B cell (primary cell): ENCODE measurements at regions of chr3 and their contacts with region 1.

Region 1: DNA sequence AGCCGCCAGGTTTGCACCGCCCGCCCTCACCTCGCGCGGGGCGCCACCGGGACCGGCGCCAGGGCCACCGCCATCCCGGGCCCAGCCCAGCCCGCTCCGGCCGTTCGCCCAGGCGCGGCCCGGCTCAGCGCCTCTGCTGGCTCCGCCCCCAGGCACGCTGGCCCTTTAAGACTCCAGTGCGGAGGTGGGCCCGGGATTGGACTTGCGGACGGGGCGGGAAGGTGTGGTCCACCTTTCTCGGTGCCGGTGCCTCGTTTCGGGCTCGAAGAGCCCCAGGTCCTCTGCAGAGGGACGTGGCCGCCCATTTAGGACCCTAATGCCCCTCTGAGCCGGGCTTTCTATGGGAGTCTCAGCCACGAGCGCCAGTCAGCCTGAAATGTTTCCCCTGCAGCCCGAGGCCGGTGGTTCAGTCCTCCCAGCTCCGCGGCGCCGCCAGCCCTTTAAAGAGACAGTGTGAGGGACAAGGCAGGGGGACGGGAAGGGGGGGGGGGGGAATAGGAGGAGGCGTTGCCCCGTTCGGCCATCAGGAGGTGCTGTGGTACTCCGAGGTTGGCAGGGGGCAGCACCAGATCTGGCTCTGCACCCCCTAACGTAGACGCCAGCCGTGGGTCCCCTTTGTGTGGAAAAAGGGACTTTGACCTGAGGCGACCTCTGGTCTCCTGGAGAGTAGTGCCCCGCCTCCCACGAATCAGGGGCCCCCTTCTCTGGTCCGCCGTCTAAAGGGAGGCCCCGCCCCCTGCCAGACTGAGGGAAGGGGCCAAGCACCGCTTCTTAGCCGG is 1.0 kb downstream of the HYAL2 start:
- DNase-seq: peak; percentile 94
- ATAC-seq: peak; percentile 80
- H3K4me3 ChIP-seq: peak overlapping the region; percentile 64 to 95 (median 74)
- H3K4me3 Mint-ChIP-seq: peak overlapping the region; percentile 98
- H3K27ac ChIP-seq: peak overlapping the region; percentile 94 to 96
- H3K27ac Mint-ChIP-seq: peak overlapping the region; percentile 97
- H3K4me1 ChIP-seq: peaks cover 22 to 58% of the 10 kb centered on the region in 2 donors
- H3K4me1 Mint-ChIP-seq: peaks cover 49% of the 10 kb centered on the region
- H3K27me3 ChIP-seq: no peaks in the 10 kb centered on the region
- H3K27me3 Mint-ChIP-seq: no peaks in the 10 kb centered on the region
- CTCF ChIP-seq: peak; percentile 65

Region 2: GRCh38 chr3:50192689-50193141 is 128.8 kb before region 1 on chr3:
- CTCF ChIA-PET with region 1: interaction called, 7 read pairs
- POLR2A ChIA-PET with region 1: no interaction called
- intact Hi-C with region 1: loop called (anchors 2 kb)
- DNase-seq: peak; percentile 88
- ATAC-seq: peak; percentile 69
- H3K4me3 ChIP-seq: no peak overlapping the region
- H3K4me3 Mint-ChIP-seq: peak overlapping the region; percentile 52
- H3K27ac ChIP-seq: no peak overlapping the region
- H3K27ac Mint-ChIP-seq: no peak overlapping the region
- H3K4me1 ChIP-seq: peaks cover 17 to 23% of the 10 kb centered on the region in 2 donors
- H3K4me1 Mint-ChIP-seq: peaks cover 11% of the 10 kb centered on the region
- H3K27me3 ChIP-seq: peaks cover 0 to 46% (median 11%) of the 10 kb centered on the region in 4 experiments
- H3K27me3 Mint-ChIP-seq: peaks cover 18% of the 10 kb centered on the region
- CTCF ChIP-seq: peak; percentile 86

Region 3: GRCh38 chr3:50272911-50273693 is 48.4 kb before region 1 on chr3:
- CTCF ChIA-PET with region 1: no interaction called
- POLR2A ChIA-PET with region 1: no interaction called
- intact Hi-C with region 1: loop called (anchors 1 kb)
- DNase-seq: peak; percentile 91
- ATAC-seq: peak; percentile 98
- H3K4me3 ChIP-seq: peak overlapping the region in 3 of 5 experiments; percentile 8 to 48 (median 30)
- H3K4me3 Mint-ChIP-seq: peak overlapping the region; percentile 82
- H3K27ac ChIP-seq: no peak overlapping the region
- H3K27ac Mint-ChIP-seq: peak overlapping the region; percentile 81
- H3K4me1 ChIP-seq: peaks cover 33 to 39% of the 10 kb centered on the region in 2 donors
- H3K4me1 Mint-ChIP-seq: peaks cover 26% of the 10 kb centered on the region
- H3K27me3 ChIP-seq: peaks cover 0 to 53% (median 21%) of the 10 kb centered on the region in 4 experiments
- H3K27me3 Mint-ChIP-seq: peaks cover 36% of the 10 kb centered on the region
- CTCF ChIP-seq: peak; percentile 97

Region 4: DNA sequence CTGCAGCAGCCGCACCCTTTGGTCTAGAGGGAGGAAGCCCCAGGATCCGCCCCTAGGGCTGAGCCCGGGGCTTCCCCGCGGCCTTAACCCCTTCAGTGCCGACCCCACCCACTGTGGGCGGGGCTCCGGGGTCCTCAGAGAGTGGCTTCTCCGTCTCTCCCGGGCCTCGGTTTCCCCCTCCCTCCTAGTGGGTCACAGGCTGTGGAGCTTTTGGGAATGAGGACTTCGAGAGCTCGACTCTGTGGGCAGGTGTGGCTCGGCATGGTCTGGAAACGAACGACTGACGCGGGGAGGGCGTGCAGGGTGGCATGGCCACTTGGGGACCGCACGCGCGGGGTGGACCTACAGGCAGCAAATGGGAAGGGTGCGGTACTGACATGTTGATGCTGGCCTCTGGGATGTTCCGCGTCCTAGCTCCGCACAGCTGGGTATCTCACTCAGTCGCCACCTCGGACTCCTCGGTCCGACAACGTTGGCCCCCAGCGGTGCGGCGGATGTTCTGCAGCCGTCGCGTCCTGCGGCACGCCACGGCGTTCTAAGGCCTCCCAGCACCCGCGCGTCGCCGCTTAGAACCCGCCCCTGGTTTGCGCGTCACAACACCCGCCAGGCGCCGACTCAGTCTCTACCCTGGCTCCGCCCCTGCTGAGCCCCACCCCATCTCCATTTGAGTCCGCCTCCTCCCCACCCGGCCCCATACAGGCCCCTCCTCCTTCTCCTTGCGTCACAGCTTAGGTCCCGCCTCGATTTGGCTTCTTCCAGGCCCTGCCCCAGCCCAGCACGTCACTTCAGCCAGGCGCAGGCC is 22.5 kb before region 1 on chr3 and contains the starts of genes HYAL3 and NAA80:
- CTCF ChIA-PET with region 1: interaction called, 28 read pairs
- POLR2A ChIA-PET with region 1: interaction called, 24 read pairs
- intact Hi-C with region 1: loop called (anchors 1 kb)
- DNase-seq: peak; percentile 100
- ATAC-seq: peak; percentile 91
- H3K4me3 ChIP-seq: peak within 1 kb of the TSS; percentile 68 to 89 (median 88)
- H3K4me3 Mint-ChIP-seq: peak within 1 kb of the TSS; percentile 100
- H3K27ac ChIP-seq: peak within 1 kb of the TSS; percentile 77 to 84
- H3K27ac Mint-ChIP-seq: peak within 1 kb of the TSS; percentile 100
- H3K4me1 ChIP-seq: peaks cover 18 to 24% of the 10 kb centered on the region in 2 donors
- H3K4me1 Mint-ChIP-seq: peaks cover 33% of the 10 kb centered on the region
- H3K27me3 ChIP-seq: no peaks in the 10 kb centered on the region
- H3K27me3 Mint-ChIP-seq: no peaks in the 10 kb centered on the region
- CTCF ChIP-seq: peak; percentile 65
- total RNA-seq, gene HYAL3: 1.9 and 3.7 TPM in 2 replicates
- total RNA-seq, gene NAA80: 33.8 and 37.8 TPM in 2 replicates

Region 5: DNA sequence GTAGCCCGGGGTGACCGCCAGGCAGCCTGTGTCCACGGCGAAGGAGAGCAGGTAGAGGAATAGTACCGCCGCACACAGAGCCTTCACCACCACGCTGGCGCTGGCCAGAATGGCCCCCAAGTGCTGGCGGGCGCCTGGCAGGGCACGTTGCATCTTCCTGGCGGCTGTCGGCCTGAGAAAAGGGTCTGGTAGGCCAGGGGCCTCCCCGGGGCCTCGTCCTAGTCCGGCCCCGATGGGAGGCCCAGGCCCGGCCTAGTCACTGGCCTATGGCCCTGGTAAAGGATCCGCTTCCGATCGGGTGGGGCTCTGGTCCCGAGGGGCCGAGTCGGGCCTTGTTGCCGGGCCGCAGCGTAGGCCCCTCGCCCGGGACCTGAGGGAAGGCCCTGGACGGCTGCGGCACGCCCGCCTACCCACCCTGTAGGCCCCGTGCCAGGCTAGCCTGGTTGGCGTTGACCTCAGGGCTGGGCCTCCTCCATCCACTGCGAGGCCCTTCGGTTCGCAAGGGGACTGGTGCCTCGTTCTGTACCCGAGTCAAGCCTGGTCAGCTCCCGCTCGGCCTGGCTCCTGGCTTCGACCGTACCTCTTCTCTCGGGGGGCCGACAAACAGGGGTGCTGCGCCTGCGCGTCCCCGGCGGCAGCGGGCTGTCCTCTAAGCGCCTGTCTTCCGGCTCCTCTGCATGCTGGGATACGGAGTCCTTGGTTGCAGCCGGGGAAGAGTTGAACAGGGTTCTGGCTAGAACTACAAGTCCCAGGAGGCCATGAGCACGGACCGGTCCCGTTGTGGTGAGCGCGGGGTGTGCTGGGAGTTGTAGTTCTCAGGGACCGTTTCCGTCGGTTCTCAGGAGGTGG is 37.6 kb after region 1 on chr3 and contains the start of gene TMEM115:
- CTCF ChIA-PET with region 1: no interaction called
- POLR2A ChIA-PET with region 1: no interaction called
- intact Hi-C with region 1: loop called (anchors 1 kb)
- DNase-seq: peak; percentile 96
- ATAC-seq: peak; percentile 100
- H3K4me3 ChIP-seq: peak within 1 kb of the TSS; percentile 19 to 93 (median 85)
- H3K4me3 Mint-ChIP-seq: peak within 1 kb of the TSS; percentile 99
- H3K27ac ChIP-seq: peak within 1 kb of the TSS; percentile 60 to 81
- H3K27ac Mint-ChIP-seq: peak within 1 kb of the TSS; percentile 96
- H3K4me1 ChIP-seq: peaks cover 28 to 40% of the 10 kb centered on the region in 2 donors
- H3K4me1 Mint-ChIP-seq: peaks cover 50% of the 10 kb centered on the region
- H3K27me3 ChIP-seq: no peaks in the 10 kb centered on the region
- H3K27me3 Mint-ChIP-seq: no peaks in the 10 kb centered on the region
- CTCF ChIP-seq: no peak
- total RNA-seq, gene TMEM115: 26.2 and 27.2 TPM in 2 replicates

Region 6: DNA sequence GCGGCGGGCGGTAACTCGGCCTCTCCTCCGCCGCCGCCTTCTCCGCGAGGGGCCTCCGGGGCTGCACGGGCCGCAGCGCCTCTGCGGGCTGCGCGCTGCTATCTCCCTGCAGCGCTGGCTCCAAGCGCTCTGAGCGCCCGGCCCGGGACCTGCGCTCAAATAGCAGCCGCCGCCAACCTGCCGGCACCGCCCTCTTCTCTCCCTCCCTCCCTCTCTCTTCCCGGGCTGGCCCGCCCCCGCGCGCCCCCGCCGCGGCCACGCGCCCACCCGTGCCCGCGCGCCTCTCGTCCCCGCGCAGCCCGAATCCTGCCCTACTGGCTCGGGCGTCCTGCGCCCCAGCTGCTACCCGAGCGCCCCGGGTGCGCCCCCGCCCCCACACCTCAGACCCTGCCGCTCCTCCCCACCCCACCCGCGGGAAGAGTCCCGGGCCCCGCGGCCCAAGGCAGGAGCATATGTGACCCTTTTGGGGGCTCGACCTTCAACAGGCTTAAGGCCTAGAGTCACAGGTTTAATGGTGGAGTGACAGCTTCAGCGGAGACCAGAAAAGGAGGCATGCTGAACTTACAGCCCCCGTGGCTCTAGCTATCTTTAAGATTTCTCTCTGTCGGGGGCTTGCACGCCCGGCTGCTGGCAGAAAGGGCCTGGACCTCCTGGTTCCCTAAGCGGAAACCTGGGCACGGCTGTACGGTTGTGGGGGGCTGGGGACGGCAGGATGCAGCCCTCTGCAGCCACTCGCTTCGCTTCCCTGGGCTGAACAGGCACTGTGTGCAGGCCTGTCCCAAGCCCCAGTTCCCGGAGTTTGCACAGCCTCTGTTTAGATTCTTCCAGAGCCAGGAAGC is 182.2 kb after region 1 on chr3 and contains the start of gene CACNA2D2:
- CTCF ChIA-PET with region 1: no interaction called
- POLR2A ChIA-PET with region 1: no interaction called
- intact Hi-C with region 1: no loop called
- DNase-seq: peak; percentile 75
- ATAC-seq: peak; percentile 83
- H3K4me3 ChIP-seq: peak within 1 kb of the TSS in 3 of 5 experiments; percentile 41 to 59 (median 48)
- H3K4me3 Mint-ChIP-seq: peak within 1 kb of the TSS; percentile 81
- H3K27ac ChIP-seq: no peak within 1 kb of the TSS
- H3K27ac Mint-ChIP-seq: no peak within 1 kb of the TSS
- H3K4me1 ChIP-seq: peaks cover 15 to 16% of the 10 kb centered on the region in 2 donors
- H3K4me1 Mint-ChIP-seq: peaks cover 10% of the 10 kb centered on the region
- H3K27me3 ChIP-seq: peaks cover 0 to 34% (median 12%) of the 10 kb centered on the region in 4 experiments
- H3K27me3 Mint-ChIP-seq: peaks cover 26% of the 10 kb centered on the region
- CTCF ChIP-seq: no peak
- total RNA-seq, gene CACNA2D2: 0.85 and 1.2 TPM in 2 replicates